ENCODE measurements at regions of chr12 and their contacts with region 1.

Region 1: GRCh38 chr12:107760809-107761501 is at the start of gene PRDM4:
- DNase-seq: peak; percentile 77 to 93
- H3K4me3 ChIP-seq: peak within 1 kb of the TSS; percentile 95
- H3K27ac ChIP-seq: no peak within 1 kb of the TSS
- H3K4me1 ChIP-seq: peaks cover 26% of the 10 kb centered on the region
- H3K27me3 ChIP-seq: no peaks in the 10 kb centered on the region
- CTCF ChIP-seq: no peak
- total RNA-seq, gene PRDM4: 21.6 and 28.7 TPM in 2 replicates

Region 2: GRCh38 chr12:107580750-107581618 is 180.0 kb before region 1 on chr12:
- CTCF ChIA-PET with region 1: no interaction called
- POLR2A ChIA-PET with region 1: no interaction called
- intact Hi-C with region 1: no loop called
- DNase-seq: no peak
- H3K4me3 ChIP-seq: no peak overlapping the region
- H3K27ac ChIP-seq: no peak overlapping the region
- H3K4me1 ChIP-seq: no peaks in the 10 kb centered on the region
- H3K27me3 ChIP-seq: no peaks in the 10 kb centered on the region
- CTCF ChIP-seq: no peak

Region 3: DNA sequence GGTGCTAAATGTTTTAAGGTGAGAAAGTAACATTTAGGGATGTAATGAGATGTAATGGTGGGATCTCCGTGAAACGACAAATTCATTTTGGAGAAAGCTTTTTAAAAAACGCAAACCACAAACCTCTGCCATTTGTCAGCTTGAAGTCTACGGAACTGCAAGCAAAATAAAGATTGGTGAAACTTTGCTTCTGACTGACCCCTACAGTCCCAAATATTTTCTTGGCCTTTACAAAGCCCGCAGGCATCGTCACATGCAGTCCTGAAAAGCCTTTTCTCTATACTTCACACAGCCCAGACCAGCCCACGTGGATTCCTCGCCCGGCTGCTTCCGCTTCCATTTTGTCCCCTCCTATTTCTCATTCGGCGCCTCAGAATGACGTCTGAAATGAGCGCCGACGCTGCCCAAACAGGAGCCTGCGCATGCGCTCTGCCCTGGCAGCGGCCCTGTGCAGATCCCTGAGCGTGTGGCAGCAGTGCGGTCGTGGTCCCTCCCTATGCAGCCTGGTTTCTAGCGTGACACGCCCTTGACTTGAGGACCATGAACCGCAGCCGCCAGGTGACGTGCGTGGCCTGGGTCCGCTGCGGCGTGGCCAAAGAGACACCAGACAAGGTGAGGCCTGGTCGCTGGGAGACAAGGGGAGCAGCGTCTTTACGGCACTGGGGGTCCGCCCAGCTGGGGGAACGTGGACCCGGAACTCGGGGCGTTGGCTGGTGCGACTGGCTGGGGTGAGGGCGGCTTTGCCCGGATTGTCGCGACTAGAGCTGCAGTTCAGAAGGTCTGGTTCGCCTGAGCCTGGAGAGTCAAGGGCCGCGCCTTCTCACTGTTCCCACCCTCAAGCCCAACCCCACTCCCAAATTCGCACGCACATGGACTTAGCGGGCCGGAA is 75.4 kb before region 1 on chr12 and contains the start of gene PWP1:
- CTCF ChIA-PET with region 1: no interaction called
- POLR2A ChIA-PET with region 1: no interaction called
- intact Hi-C with region 1: loop called (anchors 5 kb)
- DNase-seq: peak; percentile 88 to 91
- H3K4me3 ChIP-seq: peak within 1 kb of the TSS; percentile 64
- H3K27ac ChIP-seq: peak within 1 kb of the TSS; percentile 71
- H3K4me1 ChIP-seq: peaks cover 6% of the 10 kb centered on the region; the same call in 1 of the 2 replicates
- H3K27me3 ChIP-seq: no peaks in the 10 kb centered on the region
- CTCF ChIP-seq: no peak
- total RNA-seq, gene PWP1: 41.4 and 44.1 TPM in 2 replicates

Measured in PC-9 (cell line).